MCF 10A (cell line): ENCODE measurements at regions of chr13 and their contacts with region 1.

Region 1: GRCh38 chr13:76848596-76848995 is 37.6 kb downstream of the KCTD12 start:
- DNase-seq: peak; percentile 39
- H3K4me3 Mint-ChIP-seq: no peak overlapping the region
- H3K27ac Mint-ChIP-seq: no peak overlapping the region
- H3K4me1 Mint-ChIP-seq: peaks cover 18% of the 10 kb centered on the region
- H3K27me3 Mint-ChIP-seq: no peaks in the 10 kb centered on the region
- CTCF ChIP-seq: no peak

Region 2: DNA sequence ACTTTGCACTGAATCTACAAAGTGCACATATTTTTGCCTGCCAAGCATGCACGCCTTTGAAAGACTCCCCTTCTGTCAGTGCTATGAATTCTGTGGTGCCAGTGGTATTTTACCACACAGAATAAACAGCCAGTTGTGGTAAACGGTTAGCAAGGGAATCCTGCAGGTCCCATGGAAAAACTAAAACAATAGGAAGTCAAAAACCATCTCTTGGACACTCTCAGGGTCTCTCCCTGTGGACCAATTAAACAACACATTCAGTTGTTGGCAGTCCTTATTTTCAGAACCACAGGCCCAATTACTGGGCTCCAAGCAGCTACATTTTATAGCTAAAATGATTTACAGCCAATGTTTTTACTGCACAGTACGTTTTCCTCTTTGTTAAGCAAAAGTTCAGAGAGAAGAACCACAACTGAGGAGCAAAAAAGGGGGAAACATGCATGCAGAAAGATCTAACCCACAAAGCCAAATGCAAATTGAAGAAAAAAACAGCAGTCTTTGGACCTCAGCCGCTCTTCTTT is 79.3 kb before region 1 on chr13:
- CTCF ChIA-PET with region 1: no interaction called
- POLR2A ChIA-PET with region 1: no interaction called
- intact Hi-C with region 1: no loop called
- DNase-seq: no peak
- H3K4me3 Mint-ChIP-seq: no peak overlapping the region
- H3K27ac Mint-ChIP-seq: no peak overlapping the region
- H3K4me1 Mint-ChIP-seq: peaks cover 4% of the 10 kb centered on the region
- H3K27me3 Mint-ChIP-seq: no peaks in the 10 kb centered on the region
- CTCF ChIP-seq: no peak

Region 3: DNA sequence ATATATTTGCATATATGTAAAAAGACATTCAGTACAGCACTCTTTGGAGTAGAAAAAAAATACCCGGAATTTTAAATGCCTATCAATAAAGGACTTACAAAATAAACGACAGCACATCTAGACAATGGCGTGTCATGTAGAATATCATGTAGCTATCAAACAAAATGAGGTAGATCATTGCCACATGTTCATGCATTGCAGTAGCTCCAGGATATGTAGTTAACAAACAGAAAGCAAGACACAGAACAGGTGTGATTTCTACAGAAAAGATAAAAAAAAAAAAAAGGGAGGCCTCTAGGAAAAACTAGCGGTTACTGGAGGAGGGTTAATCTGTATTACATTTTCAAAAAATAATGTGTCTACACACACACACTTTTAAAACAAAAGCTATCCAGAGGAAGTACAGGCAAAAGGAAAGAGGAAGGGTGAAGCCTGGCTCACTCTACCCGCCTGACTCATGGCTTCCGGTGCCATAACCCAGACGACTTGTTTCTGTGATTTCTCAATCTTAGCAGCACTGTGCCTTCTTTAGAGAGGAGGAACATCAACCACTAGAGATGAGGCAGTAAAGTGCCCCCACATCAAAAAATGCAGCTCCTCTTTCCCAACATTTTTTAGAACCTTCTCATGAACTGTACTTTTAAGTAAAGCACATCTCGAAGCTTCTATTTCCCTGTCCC is 30.7 kb after region 1 on chr13:
- CTCF ChIA-PET with region 1: interaction called, 50 read pairs
- POLR2A ChIA-PET with region 1: interaction called, 71 read pairs
- intact Hi-C with region 1: no loop called
- DNase-seq: peak; percentile 92
- H3K4me3 Mint-ChIP-seq: peak overlapping the region; percentile 67
- H3K27ac Mint-ChIP-seq: peak overlapping the region; percentile 98
- H3K4me1 Mint-ChIP-seq: peaks cover 21% of the 10 kb centered on the region
- H3K27me3 Mint-ChIP-seq: no peaks in the 10 kb centered on the region
- CTCF ChIP-seq: no peak